HepG2 (cell line): ENCODE measurements at regions of chr17 and their contacts with region 1.

Region 1: DNA sequence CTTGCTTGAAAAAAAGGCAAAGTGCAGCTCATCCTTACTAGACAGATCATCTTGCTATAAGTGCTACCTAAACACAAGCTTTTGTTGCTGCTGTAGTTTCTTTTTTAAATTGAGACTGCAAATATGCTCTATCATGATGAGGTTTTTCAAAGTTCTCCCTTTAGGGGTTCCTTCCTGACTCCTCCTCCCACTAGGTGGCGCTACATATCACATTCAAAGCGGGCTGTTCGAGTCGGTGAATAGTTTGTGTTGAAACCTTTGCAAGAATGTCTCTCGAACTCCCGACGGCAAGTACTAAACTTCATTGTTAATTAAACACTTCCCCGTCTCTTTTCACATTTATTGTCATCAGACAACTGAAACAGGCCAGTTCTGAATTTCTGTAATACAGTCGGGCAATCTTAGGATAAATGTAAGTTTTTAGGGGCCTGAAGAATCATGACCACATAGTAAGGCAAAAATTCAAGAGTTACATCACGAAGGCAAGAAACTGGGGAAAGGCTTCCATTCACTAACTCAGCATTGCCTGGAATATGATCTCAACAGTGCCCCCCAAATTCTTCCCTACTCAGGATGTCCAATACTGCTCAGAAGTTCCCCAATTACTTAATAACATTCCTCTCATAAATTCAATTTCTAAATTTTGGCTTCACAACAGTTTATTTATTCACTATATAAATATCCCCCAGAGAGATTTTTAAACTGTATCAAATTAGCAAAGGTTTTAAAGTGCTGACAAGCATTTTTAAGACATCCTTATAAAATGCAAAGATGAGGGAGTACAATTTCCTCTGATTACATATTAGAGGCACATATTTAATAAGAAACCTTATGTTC is 6.7 kb downstream of the HS3ST3A1 start:
- DNase-seq: peak; percentile 68
- ATAC-seq: peak; percentile 78
- H3K4me3 ChIP-seq: no peak overlapping the region
- H3K27ac ChIP-seq: no peak overlapping the region
- H3K4me1 ChIP-seq: peaks cover 38% of the 10 kb centered on the region
- H3K27me3 ChIP-seq: peaks cover 0 to 19% of the 10 kb centered on the region in 2 experiments; a peak in 4 of 5 replicates
- CTCF ChIP-seq: peak; percentile 80
- EP300 ChIP-seq: no peak
- POLR2A ChIP-seq: no peak
- RAD21 ChIP-seq: peak; percentile 53; the same call in 1 of the 2 replicates

Region 2: GRCh38 chr17:13337864-13338371 is 257.1 kb before region 1 on chr17:
- CTCF ChIA-PET with region 1: interaction called, 14 read pairs
- POLR2A ChIA-PET with region 1: no interaction called
- in situ Hi-C with region 1: loop called (anchors 10 kb)
- intact Hi-C with region 1: loop called (anchors 2 kb)
- DNase-seq: peak; percentile 42
- ATAC-seq: no peak
- H3K4me3 ChIP-seq: peak overlapping the region in 2 of 3 experiments; percentile 5 to 9; a peak in 1 of 6 replicates
- H3K27ac ChIP-seq: no peak overlapping the region
- H3K4me1 ChIP-seq: peaks cover 10% of the 10 kb centered on the region
- H3K27me3 ChIP-seq: no peaks in the 10 kb centered on the region
- CTCF ChIP-seq: peak; percentile 79
- EP300 ChIP-seq: no peak
- POLR2A ChIP-seq: no peak
- RAD21 ChIP-seq: peak; percentile 64; the same call in 1 of the 2 replicates

Region 3: GRCh38 chr17:13415807-13416416 is 179.1 kb before region 1 on chr17:
- CTCF ChIA-PET with region 1: no interaction called
- POLR2A ChIA-PET with region 1: no interaction called
- in situ Hi-C with region 1: no loop called
- intact Hi-C with region 1: loop called (anchors 10 kb)
- DNase-seq: peak; percentile 84
- ATAC-seq: peak; percentile 75
- H3K4me3 ChIP-seq: peak overlapping the region in 1 of 3 experiments; percentile 18; a peak in 1 of 6 replicates
- H3K27ac ChIP-seq: peak overlapping the region; percentile 61
- H3K4me1 ChIP-seq: peaks cover 55% of the 10 kb centered on the region
- H3K27me3 ChIP-seq: no peaks in the 10 kb centered on the region
- CTCF ChIP-seq: peak; percentile 33; the same call in 1 of the 2 replicates
- EP300 ChIP-seq: peak in 1 of 2 experiments; percentile 88; a peak in 1 of 4 replicates
- POLR2A ChIP-seq: no peak
- RAD21 ChIP-seq: no peak

Region 4: DNA sequence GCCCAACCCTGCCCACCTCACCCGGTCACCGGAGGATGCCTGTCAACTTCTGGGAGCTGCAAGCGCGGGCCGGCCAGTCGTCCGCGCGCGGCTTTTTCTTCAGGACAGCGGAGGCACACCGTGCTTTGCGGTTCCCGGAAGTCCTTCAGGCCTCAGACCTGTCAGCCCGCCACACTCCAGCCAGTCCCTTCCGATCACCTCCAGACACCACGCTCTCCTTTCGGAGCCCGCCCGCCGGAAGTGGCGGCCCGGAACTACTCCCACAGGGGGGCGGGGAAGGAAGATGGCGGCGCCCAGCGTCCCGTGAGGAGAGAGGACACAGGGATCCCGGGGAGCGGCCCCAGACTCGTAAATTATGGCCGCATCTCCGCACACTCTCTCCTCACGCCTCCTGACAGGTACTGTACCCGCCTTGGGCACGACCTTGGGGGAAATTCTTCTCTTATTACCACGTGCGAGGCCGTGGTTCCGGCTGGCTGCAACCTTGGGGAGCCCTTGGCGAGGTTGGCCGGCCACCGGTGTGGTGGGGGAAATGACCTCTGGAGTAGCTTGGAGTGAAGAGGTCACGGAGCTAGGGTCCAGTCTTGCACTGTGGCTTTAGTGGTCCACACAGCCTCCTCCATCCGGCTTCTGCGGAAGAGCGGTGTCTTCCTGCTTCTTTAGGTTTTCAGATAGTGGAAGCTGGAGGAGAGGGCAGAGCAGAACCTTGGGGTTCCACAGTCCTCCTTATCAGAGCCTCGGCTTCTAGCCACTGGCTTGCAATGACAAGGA is 474.5 kb after region 1 on chr17 and contains the start of gene COX10:
- CTCF ChIA-PET with region 1: no interaction called
- POLR2A ChIA-PET with region 1: no interaction called
- in situ Hi-C with region 1: no loop called
- intact Hi-C with region 1: loop called (anchors 10 kb)
- DNase-seq: peak; percentile 86
- ATAC-seq: peak; percentile 99
- H3K4me3 ChIP-seq: peak within 1 kb of the TSS; percentile 88 to 99 (median 92)
- H3K27ac ChIP-seq: peak within 1 kb of the TSS; percentile 84
- H3K4me1 ChIP-seq: peaks cover 23% of the 10 kb centered on the region
- H3K27me3 ChIP-seq: no peaks in the 10 kb centered on the region; a peak in 1 of 5 replicates
- CTCF ChIP-seq: no peak; the same call in 1 of the 2 replicates
- EP300 ChIP-seq: no peak
- POLR2A ChIP-seq: peak; percentile 88 to 97
- RAD21 ChIP-seq: peak; percentile 39
- total RNA-seq, gene COX10: 20.1 and 20.6 TPM in 2 replicates

Region 5: DNA sequence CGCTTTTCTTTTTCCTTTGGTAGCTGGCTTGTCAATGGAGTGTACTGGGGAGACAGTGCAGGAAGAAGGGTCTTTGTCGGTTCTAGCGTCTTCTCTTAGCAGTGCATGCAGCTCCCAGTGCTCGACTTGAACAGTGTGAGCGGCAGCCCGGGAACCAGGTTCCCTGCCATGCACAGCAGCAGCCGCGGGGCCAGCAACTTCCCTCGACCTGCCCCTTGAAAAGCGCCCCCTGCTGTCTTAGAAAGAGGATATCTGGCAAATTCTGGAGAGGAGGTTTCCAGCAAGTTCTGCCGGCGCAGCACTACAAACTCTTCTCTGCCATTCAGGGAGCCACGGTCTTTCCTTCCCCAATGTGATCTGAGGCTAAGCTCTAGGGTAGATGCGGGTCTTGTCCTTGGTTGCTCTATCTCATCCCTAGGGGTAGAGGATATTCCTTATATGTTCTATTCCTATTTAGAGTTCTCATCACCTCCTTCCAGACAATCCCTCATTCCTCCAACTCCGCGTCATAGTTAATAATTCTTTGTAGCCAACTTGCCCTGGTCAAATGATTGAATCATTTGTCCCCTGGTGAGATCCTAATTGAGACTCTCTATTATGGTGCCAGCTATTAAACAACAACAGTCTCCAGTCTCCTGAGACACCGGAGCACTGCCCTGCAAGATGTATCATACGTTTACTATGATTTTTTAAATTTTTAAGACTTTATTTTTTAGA is 1218.8 kb after region 1 on chr17:
- CTCF ChIA-PET with region 1: no interaction called
- POLR2A ChIA-PET with region 1: no interaction called
- in situ Hi-C with region 1: no loop called
- intact Hi-C with region 1: loop called (anchors 10 kb)
- DNase-seq: peak; percentile 36
- ATAC-seq: peak; percentile 62
- H3K4me3 ChIP-seq: no peak overlapping the region
- H3K27ac ChIP-seq: no peak overlapping the region
- H3K4me1 ChIP-seq: no peaks in the 10 kb centered on the region
- H3K27me3 ChIP-seq: no peaks in the 10 kb centered on the region
- CTCF ChIP-seq: peak; percentile 51
- EP300 ChIP-seq: no peak
- POLR2A ChIP-seq: no peak
- RAD21 ChIP-seq: no peak

Region 6: DNA sequence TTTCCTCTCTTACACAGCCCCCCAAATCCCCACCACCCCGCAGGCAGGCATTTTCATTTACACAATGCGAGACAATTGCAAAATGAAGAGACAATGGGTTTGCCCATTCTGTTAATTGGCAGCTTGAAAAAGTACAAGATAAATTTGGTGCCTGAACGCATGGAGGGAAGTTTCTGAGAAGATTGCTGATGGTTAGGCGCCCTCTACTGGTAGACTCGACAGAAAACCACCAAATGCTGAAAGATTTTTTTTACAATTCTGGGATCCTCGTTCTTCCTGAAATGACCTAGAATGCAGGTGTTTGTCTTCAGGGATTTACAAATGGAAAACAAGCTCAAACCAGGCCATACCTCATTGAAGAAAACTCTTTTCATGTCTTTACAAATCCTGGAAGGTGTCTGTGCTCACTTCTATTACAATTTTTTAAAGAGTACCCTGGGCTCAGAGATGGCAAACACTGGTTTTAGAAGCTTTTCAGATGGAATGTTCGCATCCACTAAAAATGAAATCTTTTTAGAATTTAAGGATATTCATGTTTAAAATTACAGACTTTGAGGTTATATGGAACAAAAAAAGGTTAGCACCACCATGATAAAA is 1331.6 kb after region 1 on chr17:
- CTCF ChIA-PET with region 1: interaction called, 5 read pairs
- POLR2A ChIA-PET with region 1: no interaction called
- in situ Hi-C with region 1: loop called (anchors 10 kb)
- intact Hi-C with region 1: loop called (anchors 2 kb)
- DNase-seq: peak; percentile 38
- ATAC-seq: no peak
- H3K4me3 ChIP-seq: no peak overlapping the region
- H3K27ac ChIP-seq: no peak overlapping the region
- H3K4me1 ChIP-seq: peaks cover 17% of the 10 kb centered on the region
- H3K27me3 ChIP-seq: no peaks in the 10 kb centered on the region
- CTCF ChIP-seq: peak; percentile 79
- EP300 ChIP-seq: no peak
- POLR2A ChIP-seq: no peak
- RAD21 ChIP-seq: peak; percentile 51; the same call in 1 of the 2 replicates